Activated naive CD4-positive, alpha-beta T cell treated with anti-CD3 and anti-CD28 coated beads for 36 hours (primary cell): ENCODE measurements at regions of chr4 and their contacts with region 1.

Region 1: DNA sequence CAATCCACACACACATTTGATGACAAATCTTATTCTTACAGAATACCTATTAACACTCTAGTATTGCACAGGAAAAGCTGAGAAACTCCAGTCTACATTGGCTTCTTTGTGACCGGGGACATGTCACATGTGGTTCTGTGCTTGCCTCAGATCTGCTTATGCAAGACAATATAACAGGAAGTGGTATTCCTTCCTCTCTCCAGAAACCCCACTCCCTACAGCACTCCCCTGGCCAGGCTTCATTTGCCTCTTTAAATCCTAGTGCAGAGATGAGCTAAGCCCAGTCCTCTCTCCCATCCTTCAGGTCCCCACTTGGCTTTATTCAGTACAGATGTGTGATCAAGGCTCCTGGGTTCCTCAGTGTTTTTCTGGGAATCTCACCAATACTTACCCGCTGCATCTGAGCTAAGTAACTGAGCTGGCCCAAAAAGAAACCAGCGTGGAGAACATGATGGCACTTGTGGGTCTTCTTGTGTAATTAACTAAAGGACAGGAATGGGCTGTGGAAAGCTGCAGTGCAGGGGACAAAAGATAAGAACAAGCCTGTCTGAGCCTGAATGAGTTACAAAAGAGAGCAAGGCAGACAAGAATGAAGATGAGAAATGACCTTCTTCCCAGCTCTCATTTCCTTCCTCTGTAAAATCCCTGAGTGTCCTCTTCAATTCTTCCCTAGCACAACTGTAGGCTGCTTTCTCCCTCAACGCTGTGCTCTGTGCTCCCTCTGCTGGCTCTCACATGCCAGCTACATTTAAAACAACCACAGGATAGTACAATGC is 105.6 kb downstream of the HNRNPD start:
- DNase-seq: peak; percentile 70
- H3K4me3 Mint-ChIP-seq: no peak overlapping the region
- H3K27ac Mint-ChIP-seq: no peak overlapping the region
- H3K4me1 Mint-ChIP-seq: peaks cover 18% of the 10 kb centered on the region
- H3K27me3 Mint-ChIP-seq: no peaks in the 10 kb centered on the region

Region 2: GRCh38 chr4:81844717-81845116 is 423.5 kb before region 1 on chr4:
- CTCF ChIA-PET with region 1: interaction called, 4 read pairs
- intact Hi-C with region 1: loop called (anchors 2 kb)
- DNase-seq: peak; percentile 89
- H3K4me3 Mint-ChIP-seq: no peak overlapping the region
- H3K27ac Mint-ChIP-seq: no peak overlapping the region
- H3K4me1 Mint-ChIP-seq: peaks cover 13% of the 10 kb centered on the region
- H3K27me3 Mint-ChIP-seq: no peaks in the 10 kb centered on the region

Region 3: GRCh38 chr4:82044142-82044993 is 223.9 kb before region 1 on chr4:
- CTCF ChIA-PET with region 1: interaction called, 5 read pairs
- intact Hi-C with region 1: loop called (anchors 5 kb)
- DNase-seq: peak; percentile 18
- H3K4me3 Mint-ChIP-seq: peak overlapping the region; percentile 12
- H3K27ac Mint-ChIP-seq: no peak overlapping the region
- H3K4me1 Mint-ChIP-seq: peaks cover 19% of the 10 kb centered on the region
- H3K27me3 Mint-ChIP-seq: peaks cover 44% of the 10 kb centered on the region

Region 4: DNA sequence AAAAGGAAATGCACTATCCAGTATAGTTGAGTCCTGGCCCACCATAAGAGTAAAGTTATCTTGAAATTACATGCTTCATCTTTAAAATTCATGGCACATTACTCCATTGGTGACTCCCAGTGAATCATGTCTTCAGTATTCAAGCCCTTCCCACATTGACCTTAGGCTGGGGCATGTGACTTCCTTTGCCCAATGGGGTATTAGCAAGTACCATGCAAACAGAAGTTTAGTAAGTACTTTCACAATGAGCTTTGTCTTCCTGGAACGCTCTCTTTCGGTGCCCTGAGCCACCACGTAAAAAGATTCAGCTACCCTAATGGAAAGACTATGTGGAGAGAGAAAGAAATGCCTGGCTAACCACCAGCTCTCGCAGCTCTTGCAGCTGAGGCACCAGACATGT is 129.9 kb before region 1 on chr4:
- CTCF ChIA-PET with region 1: interaction called, 4 read pairs
- intact Hi-C with region 1: loop called (anchors 5 kb)
- DNase-seq: peak; percentile 9
- H3K4me3 Mint-ChIP-seq: no peak overlapping the region
- H3K27ac Mint-ChIP-seq: no peak overlapping the region
- H3K4me1 Mint-ChIP-seq: peaks cover 28% of the 10 kb centered on the region
- H3K27me3 Mint-ChIP-seq: no peaks in the 10 kb centered on the region

Region 5: GRCh38 chr4:82256718-82257117 is 11.5 kb before region 1 on chr4:
- CTCF ChIA-PET with region 1: interaction called, 11 read pairs
- intact Hi-C with region 1: no loop called
- DNase-seq: no peak
- H3K4me3 Mint-ChIP-seq: no peak overlapping the region
- H3K27ac Mint-ChIP-seq: no peak overlapping the region
- H3K4me1 Mint-ChIP-seq: no peaks in the 10 kb centered on the region
- H3K27me3 Mint-ChIP-seq: no peaks in the 10 kb centered on the region